ENCODE measurements at regions of chr1 and their contacts with region 1.

Region 1: DNA sequence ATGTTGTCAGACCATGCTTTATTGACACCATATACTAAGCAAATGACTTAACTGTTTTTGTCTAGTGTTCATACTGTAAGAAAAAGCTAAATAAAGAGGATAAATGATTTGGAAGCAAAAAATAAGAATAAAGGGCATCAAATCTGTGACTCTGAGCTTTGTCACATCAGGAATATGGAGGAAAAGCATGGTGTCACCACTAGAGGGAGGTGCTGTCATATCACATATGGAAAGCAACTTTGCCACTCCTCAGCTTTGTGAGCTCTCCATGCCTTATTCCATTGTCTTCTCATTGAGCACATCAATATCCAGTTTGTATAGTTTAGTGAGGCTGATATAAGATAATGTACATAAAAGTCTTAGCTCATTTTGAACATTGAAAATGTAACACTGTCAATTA is 20.8 kb upstream of the GBP1 start:
- DNase-seq: peak in 6 of 9 donors; percentile 30 to 69 (median 42)
- ATAC-seq: peak; percentile 84
- H3K4me3 ChIP-seq: no peak overlapping the region
- H3K4me3 Mint-ChIP-seq: no peak overlapping the region
- H3K27ac ChIP-seq: no peak overlapping the region
- H3K27ac Mint-ChIP-seq: no peak overlapping the region
- H3K4me1 ChIP-seq: no peaks in the 10 kb centered on the region
- H3K4me1 Mint-ChIP-seq: peaks cover 0 to 12% (median 0%) of the 10 kb centered on the region in 7 donors
- H3K27me3 ChIP-seq: no peaks in the 10 kb centered on the region
- H3K27me3 Mint-ChIP-seq: peaks cover 0 to 2% (median 0%) of the 10 kb centered on the region in 5 donors

Region 2: DNA sequence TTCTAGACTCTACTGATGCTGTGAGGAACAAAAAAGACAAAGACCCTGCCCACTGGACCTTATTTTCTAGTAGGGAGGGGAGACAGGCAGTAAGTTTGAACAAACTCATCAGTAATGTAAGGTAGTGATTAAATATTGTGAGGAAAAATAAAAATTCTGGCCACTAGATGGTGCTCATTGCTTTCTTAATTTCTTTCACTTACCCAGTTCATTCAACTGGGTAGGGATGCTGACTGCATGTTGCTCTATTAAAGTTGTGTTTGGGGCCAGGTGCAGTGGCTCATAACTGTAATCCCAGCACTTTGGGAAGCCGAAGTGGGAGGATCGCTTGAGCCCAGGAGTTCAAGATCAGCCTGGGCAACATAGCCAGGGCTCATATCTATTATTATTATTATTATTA is 87.1 kb before region 1 on chr1:
- CTCF ChIA-PET with region 1: interaction called, 3 read pairs
- POLR2A ChIA-PET with region 1: interaction called, 3 read pairs
- intact Hi-C with region 1: loop called (anchors 1 kb)
- DNase-seq: peak in 7 of 9 donors; percentile 59 to 81 (median 76)
- ATAC-seq: peak; percentile 90
- H3K4me3 ChIP-seq: no peak overlapping the region
- H3K4me3 Mint-ChIP-seq: no peak overlapping the region
- H3K27ac ChIP-seq: no peak overlapping the region
- H3K27ac Mint-ChIP-seq: peak overlapping the region in 1 of 9 donors; percentile 68
- H3K4me1 ChIP-seq: peaks cover 12 to 19% of the 10 kb centered on the region in 2 donors
- H3K4me1 Mint-ChIP-seq: peaks cover 17 to 49% (median 34%) of the 10 kb centered on the region in 7 donors
- H3K27me3 ChIP-seq: no peaks in the 10 kb centered on the region
- H3K27me3 Mint-ChIP-seq: peaks cover 0 to 2% (median 0%) of the 10 kb centered on the region in 5 donors

Region 3: DNA sequence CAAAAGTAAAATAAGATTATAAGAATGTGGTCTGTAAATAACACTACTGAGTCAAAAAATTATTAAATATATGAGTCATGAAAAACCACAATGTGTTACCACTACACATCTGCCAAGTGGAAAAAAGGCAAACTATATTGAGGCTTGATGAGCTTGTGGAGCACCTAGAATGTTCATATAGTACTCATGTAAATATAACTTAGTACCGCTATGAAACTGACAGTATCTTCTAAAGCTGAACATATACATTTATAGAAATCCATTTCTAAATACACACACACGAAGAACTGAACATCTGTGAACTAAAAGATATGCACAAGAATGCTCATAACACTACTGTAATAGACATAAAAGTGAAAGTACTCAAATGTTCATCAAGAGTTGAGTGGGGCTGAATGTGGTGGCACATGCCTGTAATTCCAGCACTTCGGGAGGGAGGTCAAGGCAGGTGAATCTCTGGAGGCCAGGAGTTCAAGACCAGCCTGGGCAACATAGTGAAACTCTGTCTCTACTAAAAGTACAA is 44.6 kb before region 1 on chr1:
- CTCF ChIA-PET with region 1: no interaction called
- POLR2A ChIA-PET with region 1: no interaction called
- intact Hi-C with region 1: no loop called
- DNase-seq: peak in 1 of 9 donors; percentile 33
- ATAC-seq: no peak
- H3K4me3 ChIP-seq: no peak overlapping the region
- H3K4me3 Mint-ChIP-seq: peak overlapping the region in 1 of 10 donors; percentile 12
- H3K27ac ChIP-seq: no peak overlapping the region
- H3K27ac Mint-ChIP-seq: peak overlapping the region in 2 of 9 donors; percentile 32 to 51
- H3K4me1 ChIP-seq: no peaks in the 10 kb centered on the region
- H3K4me1 Mint-ChIP-seq: peaks cover 0 to 23% (median 21%) of the 10 kb centered on the region in 7 donors
- H3K27me3 ChIP-seq: no peaks in the 10 kb centered on the region
- H3K27me3 Mint-ChIP-seq: peaks cover 0 to 3% (median 0%) of the 10 kb centered on the region in 5 donors

Region 4: GRCh38 chr1:89104147-89104546 is 18.4 kb after region 1 on chr1:
- CTCF ChIA-PET with region 1: interaction called, 4 read pairs
- POLR2A ChIA-PET with region 1: no interaction called
- intact Hi-C with region 1: loop called in 1 of 2 experiments (anchors 2 kb)
- DNase-seq: no peak
- ATAC-seq: no peak
- H3K4me3 ChIP-seq: no peak overlapping the region
- H3K4me3 Mint-ChIP-seq: no peak overlapping the region
- H3K27ac ChIP-seq: no peak overlapping the region
- H3K27ac Mint-ChIP-seq: peak overlapping the region in 4 of 9 donors; percentile 14 to 71 (median 45)
- H3K4me1 ChIP-seq: no peaks in the 10 kb centered on the region
- H3K4me1 Mint-ChIP-seq: peaks cover 0 to 13% (median 9%) of the 10 kb centered on the region in 7 donors
- H3K27me3 ChIP-seq: no peaks in the 10 kb centered on the region
- H3K27me3 Mint-ChIP-seq: no peaks in the 10 kb centered on the region

Region 5: GRCh38 chr1:89151047-89151446 is 65.3 kb after region 1 on chr1:
- CTCF ChIA-PET with region 1: no interaction called
- POLR2A ChIA-PET with region 1: no interaction called
- intact Hi-C with region 1: loop called in 1 of 2 experiments (anchors 10 kb)
- DNase-seq: no peak
- ATAC-seq: no peak
- H3K4me3 ChIP-seq: no peak overlapping the region
- H3K4me3 Mint-ChIP-seq: no peak overlapping the region
- H3K27ac ChIP-seq: no peak overlapping the region
- H3K27ac Mint-ChIP-seq: no peak overlapping the region
- H3K4me1 ChIP-seq: no peaks in the 10 kb centered on the region
- H3K4me1 Mint-ChIP-seq: peaks cover 0 to 11% (median 7%) of the 10 kb centered on the region in 7 donors
- H3K27me3 ChIP-seq: no peaks in the 10 kb centered on the region
- H3K27me3 Mint-ChIP-seq: peaks cover 0 to 8% (median 0%) of the 10 kb centered on the region in 5 donors

Region 6: GRCh38 chr1:89261926-89262515 is 176.2 kb after region 1 on chr1:
- CTCF ChIA-PET with region 1: no interaction called
- POLR2A ChIA-PET with region 1: no interaction called
- intact Hi-C with region 1: loop called in 1 of 2 experiments (anchors 10 kb)
- DNase-seq: no peak
- ATAC-seq: no peak
- H3K4me3 ChIP-seq: peak overlapping the region; percentile 14
- H3K4me3 Mint-ChIP-seq: peak overlapping the region in 5 of 10 donors; percentile 12 to 91 (median 58)
- H3K27ac ChIP-seq: no peak overlapping the region
- H3K27ac Mint-ChIP-seq: peak overlapping the region in 8 of 9 donors; percentile 22 to 93 (median 56)
- H3K4me1 ChIP-seq: peaks cover 39 to 75% of the 10 kb centered on the region in 2 donors
- H3K4me1 Mint-ChIP-seq: peaks cover 49 to 76% (median 68%) of the 10 kb centered on the region in 7 donors
- H3K27me3 ChIP-seq: no peaks in the 10 kb centered on the region
- H3K27me3 Mint-ChIP-seq: no peaks in the 10 kb centered on the region

Region 7: DNA sequence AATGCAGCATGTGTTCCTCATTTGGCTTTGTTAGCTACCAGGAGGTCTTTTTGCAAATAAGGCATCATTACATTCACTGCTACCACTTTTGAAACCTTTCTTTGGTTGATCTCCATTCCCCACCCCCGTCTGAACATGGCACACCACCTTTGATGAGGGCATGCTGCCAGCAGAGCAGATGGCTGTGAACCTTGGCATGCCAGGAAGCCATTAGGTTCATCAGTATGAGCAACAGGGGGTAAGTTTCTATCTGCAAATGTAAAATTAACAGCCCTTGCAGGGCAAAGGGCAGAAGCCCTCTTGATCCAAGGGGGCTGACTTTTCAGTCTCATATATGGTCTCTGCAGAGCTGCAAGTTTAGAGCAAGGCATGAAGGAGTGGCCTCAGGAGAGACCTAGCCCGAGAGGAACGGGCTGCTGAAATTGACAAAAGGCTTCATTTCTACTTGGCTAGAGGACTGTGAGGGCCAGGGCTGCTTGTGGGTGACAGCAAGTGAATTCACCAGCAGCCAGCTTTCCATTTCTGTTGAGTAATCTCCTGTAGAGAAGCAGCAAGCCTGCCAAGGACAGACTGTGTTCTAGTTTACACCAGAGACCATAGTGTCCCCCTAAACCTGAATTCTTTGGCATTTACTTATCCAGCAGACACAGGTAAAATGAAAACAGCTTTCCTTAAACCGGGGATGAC is 1037.0 kb after region 1 on chr1:
- CTCF ChIA-PET with region 1: no interaction called
- POLR2A ChIA-PET with region 1: no interaction called
- intact Hi-C with region 1: no loop called
- DNase-seq: no peak
- ATAC-seq: no peak
- H3K4me3 ChIP-seq: no peak overlapping the region
- H3K4me3 Mint-ChIP-seq: no peak overlapping the region
- H3K27ac ChIP-seq: no peak overlapping the region
- H3K27ac Mint-ChIP-seq: no peak overlapping the region
- H3K4me1 ChIP-seq: no peaks in the 10 kb centered on the region
- H3K4me1 Mint-ChIP-seq: no peaks in the 10 kb centered on the region
- H3K27me3 ChIP-seq: peaks cover 0 to 3% of the 10 kb centered on the region in 2 donors
- H3K27me3 Mint-ChIP-seq: peaks cover 10 to 43% (median 40%) of the 10 kb centered on the region in 5 donors